Calu3 (cell line): ENCODE measurements at regions of chr3 and their contacts with region 1.

Region 1: GRCh38 chr3:32177702-32178198 is 60.7 kb upstream of the CMTM8 start:
- DNase-seq: peak; percentile 83
- H3K4me3 Mint-ChIP-seq: peak overlapping the region; percentile 45
- H3K27ac Mint-ChIP-seq: no peak overlapping the region
- H3K4me1 Mint-ChIP-seq: peaks cover 18% of the 10 kb centered on the region
- H3K27me3 Mint-ChIP-seq: no peaks in the 10 kb centered on the region
- CTCF ChIP-seq: peak; percentile 80

Region 2: DNA sequence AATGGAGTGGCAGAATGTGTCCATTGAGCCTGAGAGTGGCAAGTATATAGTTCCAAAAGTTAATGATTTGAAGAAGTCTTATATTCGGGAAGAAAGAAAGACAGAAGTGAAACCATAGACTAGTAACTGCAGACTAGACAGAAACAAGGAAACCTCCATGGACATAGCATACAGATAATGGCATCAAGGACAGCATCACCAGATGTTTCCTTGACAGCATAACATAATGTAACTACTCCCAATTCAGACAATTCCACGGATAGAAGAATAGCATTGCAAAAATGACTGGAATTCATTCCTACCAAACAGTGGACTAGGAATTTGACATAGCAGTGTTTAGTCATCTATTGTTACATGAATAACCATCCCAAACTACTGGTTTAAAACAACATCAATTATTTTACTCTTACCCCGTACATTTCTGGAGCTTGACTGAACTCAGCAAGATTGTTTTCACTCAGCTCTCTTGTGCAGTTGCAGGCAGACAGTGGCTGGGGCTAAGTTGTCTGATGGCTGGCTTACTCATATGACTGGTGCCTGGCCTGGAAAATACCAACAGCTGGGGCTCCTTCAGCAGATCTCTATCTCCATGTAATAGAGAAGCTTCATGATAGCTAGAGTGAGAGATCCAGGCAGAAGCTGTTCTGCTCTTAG is 1173.6 kb before region 1 on chr3:
- CTCF ChIA-PET with region 1: no interaction called
- intact Hi-C with region 1: no loop called
- DNase-seq: no peak
- H3K4me3 Mint-ChIP-seq: no peak overlapping the region
- H3K27ac Mint-ChIP-seq: no peak overlapping the region
- H3K4me1 Mint-ChIP-seq: no peaks in the 10 kb centered on the region
- H3K27me3 Mint-ChIP-seq: peaks cover 22% of the 10 kb centered on the region
- CTCF ChIP-seq: no peak

Region 3: GRCh38 chr3:31219131-31219843 is 958.5 kb before region 1 on chr3:
- CTCF ChIA-PET with region 1: no interaction called
- intact Hi-C with region 1: no loop called
- DNase-seq: no peak
- H3K4me3 Mint-ChIP-seq: no peak overlapping the region
- H3K27ac Mint-ChIP-seq: no peak overlapping the region
- H3K4me1 Mint-ChIP-seq: no peaks in the 10 kb centered on the region
- H3K27me3 Mint-ChIP-seq: no peaks in the 10 kb centered on the region
- CTCF ChIP-seq: no peak

Region 4: GRCh38 chr3:32296256-32297204 is 118.8 kb after region 1 on chr3:
- CTCF ChIA-PET with region 1: no interaction called
- intact Hi-C with region 1: loop called (anchors 5 kb)
- DNase-seq: peak; percentile 52
- H3K4me3 Mint-ChIP-seq: no peak overlapping the region
- H3K27ac Mint-ChIP-seq: no peak overlapping the region
- H3K4me1 Mint-ChIP-seq: peaks cover 11% of the 10 kb centered on the region
- H3K27me3 Mint-ChIP-seq: no peaks in the 10 kb centered on the region
- CTCF ChIP-seq: peak; percentile 71

Region 5: GRCh38 chr3:32401556-32402081 is 223.9 kb after region 1 on chr3:
- CTCF ChIA-PET with region 1: no interaction called
- intact Hi-C with region 1: loop called (anchors 2 kb)
- DNase-seq: peak; percentile 62
- H3K4me3 Mint-ChIP-seq: peak overlapping the region; percentile 81
- H3K27ac Mint-ChIP-seq: peak overlapping the region; percentile 98
- H3K4me1 Mint-ChIP-seq: peaks cover 84% of the 10 kb centered on the region
- H3K27me3 Mint-ChIP-seq: no peaks in the 10 kb centered on the region
- CTCF ChIP-seq: no peak

Region 6: DNA sequence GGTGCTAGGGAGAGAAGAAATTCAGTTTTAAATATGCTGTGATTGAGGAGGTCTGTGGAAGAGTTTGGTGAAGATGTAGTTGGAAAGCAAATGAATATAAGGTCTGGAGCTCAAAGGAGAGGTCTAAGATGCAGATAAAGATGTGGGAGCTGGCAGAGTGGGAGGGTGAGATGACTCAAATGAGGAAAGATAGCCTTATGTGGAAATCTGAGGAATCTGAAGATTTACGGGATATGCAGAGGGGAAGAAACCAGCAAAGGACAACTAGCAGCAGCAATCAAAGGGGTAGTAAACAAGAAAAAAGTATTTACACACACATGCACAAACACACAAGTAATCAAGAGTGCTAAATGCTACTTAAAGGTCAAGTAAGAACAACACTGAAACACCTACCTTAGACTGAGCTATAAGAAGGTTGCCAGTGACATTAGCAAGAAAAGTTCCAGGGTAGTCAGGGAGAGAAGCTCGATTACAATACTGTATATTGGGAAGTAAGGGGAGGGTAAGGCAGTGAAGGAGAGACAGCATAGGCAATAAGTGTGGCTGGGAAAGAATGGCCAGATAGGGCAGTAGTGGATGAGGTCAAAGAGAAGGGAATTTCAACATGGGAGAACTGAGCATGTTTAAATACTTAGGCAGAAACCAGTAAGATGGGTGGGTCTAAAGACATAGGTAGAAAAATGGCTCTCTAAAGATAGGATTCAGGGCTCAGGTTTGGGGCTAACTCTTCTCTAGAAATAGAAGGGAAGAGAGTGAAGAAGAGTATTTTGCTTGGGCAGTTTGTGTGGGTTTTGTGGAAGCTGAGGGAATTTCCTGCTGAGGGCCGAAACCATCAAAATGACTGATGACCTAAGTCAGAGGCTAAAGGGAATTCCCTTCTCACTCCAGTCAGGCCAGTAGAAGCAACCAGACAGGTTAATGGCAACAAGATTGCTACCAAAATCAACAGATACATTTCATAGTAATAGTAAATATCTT is 316.0 kb after region 1 on chr3:
- CTCF ChIA-PET with region 1: no interaction called
- intact Hi-C with region 1: loop called (anchors 10 kb)
- DNase-seq: no peak
- H3K4me3 Mint-ChIP-seq: no peak overlapping the region
- H3K27ac Mint-ChIP-seq: no peak overlapping the region
- H3K4me1 Mint-ChIP-seq: peaks cover 10% of the 10 kb centered on the region
- H3K27me3 Mint-ChIP-seq: no peaks in the 10 kb centered on the region
- CTCF ChIP-seq: no peak

Region 7: DNA sequence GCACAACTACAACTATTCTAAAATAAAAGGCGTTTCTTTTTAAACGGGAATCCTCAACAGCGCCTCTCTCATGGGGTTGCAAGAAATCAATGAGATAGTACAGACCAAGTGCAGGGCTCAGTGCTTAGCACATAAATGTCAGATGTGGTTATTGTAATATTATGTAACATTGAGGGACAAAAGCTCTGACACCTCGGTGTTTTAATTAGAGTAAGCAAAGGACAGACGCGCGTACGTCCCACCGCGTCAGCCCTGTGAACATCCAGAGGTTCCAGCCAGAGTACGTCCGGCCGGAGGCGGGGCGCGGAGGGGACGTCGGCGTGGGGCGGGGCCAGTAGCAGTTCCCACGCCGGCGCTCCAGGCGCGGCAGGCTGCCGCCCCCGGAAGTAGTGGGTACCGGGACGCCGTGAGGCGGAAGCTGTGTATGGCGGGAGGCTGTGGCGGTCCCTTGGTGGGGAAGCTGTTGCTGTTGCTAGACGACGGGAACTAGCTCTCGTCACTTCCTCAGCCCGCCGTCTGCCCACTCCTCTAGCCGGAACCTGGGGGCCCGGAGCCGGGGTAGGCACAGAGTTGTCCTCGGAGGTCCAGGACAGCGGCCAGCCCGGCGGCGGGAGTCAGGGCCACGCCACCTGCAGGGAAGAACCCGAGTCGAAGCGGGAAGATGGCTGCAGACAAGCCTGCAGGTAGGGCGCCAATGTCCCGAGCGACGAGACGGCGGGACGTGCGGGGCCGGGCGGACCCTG is 507.2 kb after region 1 on chr3 and contains the start of gene CNOT10:
- CTCF ChIA-PET with region 1: interaction called, 10 read pairs
- intact Hi-C with region 1: no loop called
- DNase-seq: peak; percentile 95
- H3K4me3 Mint-ChIP-seq: peak within 1 kb of the TSS; percentile 95
- H3K27ac Mint-ChIP-seq: peak within 1 kb of the TSS; percentile 61
- H3K4me1 Mint-ChIP-seq: peaks cover 18% of the 10 kb centered on the region
- H3K27me3 Mint-ChIP-seq: no peaks in the 10 kb centered on the region
- CTCF ChIP-seq: no peak
- total RNA-seq, gene CNOT10: 41.4 and 45.1 TPM in 2 replicates